Left cardiac atrium (tissue), 4 donors: ENCODE measurements at regions of chr13 and their contacts with region 1.

Region 1: GRCh38 chr13:45623515-45624090 is 8.1 kb upstream of the ERICH6B start:
- DNase-seq: no peak
- ATAC-seq: no peak

Region 2: GRCh38 chr13:45768656-45769479 is 145.3 kb after region 1 on chr13:
- intact Hi-C with region 1: no loop called
- DNase-seq: no peak
- ATAC-seq: no peak

Region 3: DNA sequence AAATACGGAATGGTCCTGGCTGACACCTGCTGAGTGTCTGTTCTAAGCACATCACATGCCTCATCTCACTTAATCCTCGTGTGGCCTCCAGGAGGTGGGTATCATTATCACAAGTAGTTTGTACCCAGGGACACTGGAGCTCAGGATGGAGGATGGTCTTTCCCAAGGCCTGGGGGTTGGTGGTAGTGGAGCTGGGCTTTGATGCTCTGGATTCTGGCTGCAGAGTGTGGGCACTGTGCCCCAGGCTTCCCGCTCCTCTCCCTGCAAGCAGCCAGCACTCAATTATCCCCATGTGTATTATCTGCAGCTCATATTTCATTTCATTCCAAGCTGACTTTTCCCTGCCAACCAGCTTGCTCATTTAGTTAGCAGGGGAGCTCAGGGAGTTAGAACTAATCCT is 175.8 kb after region 1 on chr13:
- intact Hi-C with region 1: loop called in 1 of 2 experiments (anchors 10 kb)
- DNase-seq: peak; percentile 36
- ATAC-seq: peak; percentile 72 to 83

Region 4: GRCh38 chr13:45809801-45810394 is 186.3 kb after region 1 on chr13:
- intact Hi-C with region 1: no loop called
- DNase-seq: no peak
- ATAC-seq: no peak

Region 5: DNA sequence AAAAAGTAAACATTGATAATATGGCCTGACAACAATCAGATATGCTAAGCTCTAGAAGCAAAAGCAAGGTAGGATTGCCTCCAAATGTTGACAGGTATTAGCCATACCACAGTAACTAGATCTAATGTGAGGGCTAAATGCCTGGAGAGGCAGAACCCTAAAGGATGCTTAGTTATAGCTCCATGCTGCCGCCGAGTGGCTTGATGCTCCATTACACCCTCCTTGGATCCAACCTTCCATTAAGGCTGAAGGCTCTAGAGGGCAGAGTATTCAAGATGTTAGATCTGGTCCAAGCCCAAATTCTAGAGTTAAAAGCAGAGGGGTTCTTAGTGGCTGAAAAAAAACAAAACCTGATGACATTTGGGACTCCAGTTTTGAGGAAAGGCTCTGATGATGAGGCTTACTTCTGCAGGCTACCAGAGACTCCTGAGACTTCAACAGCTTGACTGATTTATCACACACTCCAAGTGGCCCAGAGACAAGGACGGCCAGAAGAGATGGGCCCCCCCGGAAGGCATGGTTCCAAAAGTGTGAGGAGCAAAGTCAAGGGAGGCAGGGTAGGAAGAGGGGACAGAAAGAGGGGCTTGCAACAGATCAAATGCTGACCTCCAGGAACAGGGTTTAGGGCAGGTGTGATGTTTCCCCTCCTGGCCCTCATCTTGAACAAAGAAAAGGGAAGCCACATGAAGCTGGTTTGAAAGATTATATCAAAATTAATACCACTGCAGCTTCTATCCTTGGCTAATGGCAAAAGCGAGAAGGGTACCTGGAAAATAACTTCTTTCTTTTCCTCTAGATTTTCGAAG is 503.2 kb after region 1 on chr13:
- intact Hi-C with region 1: loop called in 1 of 2 experiments (anchors 10 kb)
- DNase-seq: peak; percentile 48
- ATAC-seq: peak; percentile 88 to 89